Ovary (tissue), 10 donors: ENCODE measurements at regions of chr3 and their contacts with region 1.

Region 1: DNA sequence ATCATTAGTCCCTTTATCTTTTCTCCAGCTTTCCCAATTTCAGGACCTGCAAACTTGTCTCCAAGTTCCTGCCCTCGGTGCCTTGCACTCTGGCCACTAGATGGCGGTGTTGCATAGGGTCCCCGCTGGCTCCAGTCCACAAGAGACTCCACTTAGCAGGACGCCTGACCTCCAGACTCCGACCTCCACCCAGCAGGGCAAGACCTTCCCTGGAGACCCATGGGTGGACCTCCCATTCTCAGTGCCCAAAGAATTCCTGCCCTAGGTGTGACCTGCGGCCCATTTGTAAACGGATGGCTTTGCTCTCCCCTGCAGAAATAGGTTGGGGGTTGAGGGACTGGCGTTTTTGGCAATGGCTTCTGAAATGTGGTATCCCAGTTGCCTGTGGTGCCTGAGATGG is 82.6 kb downstream of the LSM3 start:
- DNase-seq: peak; percentile 82 to 90 (median 89)
- H3K4me3 ChIP-seq: no peak overlapping the region
- H3K27ac ChIP-seq: no peak overlapping the region
- H3K4me1 ChIP-seq: peaks cover 21% of the 10 kb centered on the region
- H3K27me3 ChIP-seq: no peaks in the 10 kb centered on the region
- CTCF ChIP-seq: peak; percentile 84 to 89 (median 85)
- EP300 ChIP-seq: no peak
- POLR2A ChIP-seq: no peak

Region 2: DNA sequence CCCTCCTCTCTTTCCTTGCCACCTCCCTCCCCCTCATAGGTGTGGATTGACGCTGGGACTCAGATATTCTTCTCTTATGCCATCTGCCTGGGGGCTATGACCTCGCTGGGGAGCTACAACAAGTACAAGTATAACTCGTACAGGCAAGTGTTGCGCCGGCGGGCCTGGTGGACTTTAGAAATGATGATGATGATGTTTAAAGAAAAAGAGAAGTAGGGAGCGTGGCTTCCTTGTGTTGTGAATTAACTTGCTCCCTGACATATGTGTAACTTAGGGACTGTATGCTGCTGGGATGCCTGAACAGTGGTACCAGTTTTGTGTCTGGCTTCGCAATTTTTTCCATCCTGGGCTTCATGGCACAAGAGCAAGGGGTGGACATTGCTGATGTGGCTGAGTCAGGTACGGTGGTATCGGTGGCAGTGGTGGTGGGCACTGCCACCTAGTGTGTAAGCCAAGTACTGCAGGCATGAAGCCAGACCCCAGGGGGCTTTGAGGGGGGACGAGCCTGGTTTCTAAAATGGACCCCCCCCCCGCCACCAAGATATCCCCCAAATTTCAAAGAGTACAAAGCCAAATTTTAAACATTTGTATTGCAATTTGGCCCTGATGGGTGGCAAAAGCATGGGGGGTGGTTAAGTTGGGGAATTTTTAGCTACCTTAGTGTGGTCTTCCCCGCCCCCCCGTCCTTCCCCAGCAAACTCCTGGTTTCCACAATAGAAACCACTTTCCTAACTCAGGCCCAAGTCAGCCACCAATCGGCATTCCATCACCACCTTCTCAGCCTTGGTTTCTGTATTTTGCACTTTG is 206.8 kb after region 1 on chr3:
- intact Hi-C with region 1: loop called (anchors 1 to 5 kb)
- DNase-seq: peak in 4 of 5 donors; percentile 62 to 73 (median 69)
- H3K4me3 ChIP-seq: no peak overlapping the region
- H3K27ac ChIP-seq: peak overlapping the region; percentile 44 to 65
- H3K4me1 ChIP-seq: peaks cover 18% of the 10 kb centered on the region
- H3K27me3 ChIP-seq: no peaks in the 10 kb centered on the region
- CTCF ChIP-seq: peak; percentile 50 to 94 (median 87)
- EP300 ChIP-seq: no peak
- POLR2A ChIP-seq: peak; percentile 18